Dorsolateral prefrontal cortex (tissue), 120 donors: ENCODE measurements at regions of chr3 and their contacts with region 1.

Region 1: DNA sequence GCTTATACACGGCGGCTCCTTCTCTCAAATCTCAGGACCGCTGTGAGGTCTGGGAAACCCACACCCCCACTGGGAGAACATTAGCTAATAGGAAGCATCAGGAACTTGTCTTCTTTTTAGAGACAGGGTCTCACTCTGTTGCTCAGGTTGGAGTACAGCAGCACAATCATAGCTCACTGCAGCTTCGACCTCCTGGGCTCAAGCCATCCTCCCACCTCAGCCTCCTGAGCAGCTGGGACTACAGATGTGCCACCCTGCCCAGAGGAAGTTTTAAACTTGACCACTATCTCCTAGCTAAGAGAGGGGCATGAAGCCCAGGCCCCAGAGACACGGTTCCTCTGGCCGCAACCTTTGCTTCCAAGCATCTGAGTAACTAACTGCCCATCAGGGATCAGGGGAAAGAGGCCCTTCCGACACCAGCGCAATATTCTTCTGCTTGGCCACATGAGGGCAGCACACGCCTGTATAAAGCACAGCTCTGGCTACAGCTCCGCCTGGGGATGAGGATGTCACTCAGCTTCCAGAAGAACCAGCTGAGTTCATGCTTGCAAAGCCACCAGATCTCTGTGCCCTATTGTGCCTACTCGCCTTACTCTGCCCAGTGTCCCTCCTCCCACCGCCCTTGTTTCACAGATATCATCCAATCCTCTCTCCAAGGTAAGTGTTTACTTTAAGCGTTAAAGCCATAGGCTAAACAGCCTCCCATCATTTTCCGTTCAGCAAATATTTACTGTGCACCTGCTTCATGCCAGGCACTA is 57.5 kb upstream of the SLC6A11 start:
- DNase-seq: peak in 9 of 10 donors; percentile 61 to 83 (median 75)
- H3K4me3 ChIP-seq: no peak overlapping the region
- H3K27ac ChIP-seq: peak overlapping the region in 15 of 59 donors; percentile 3 to 59 (median 41)
- H3K27me3 ChIP-seq: no peaks in the 10 kb centered on the region
- CTCF ChIP-seq: peak; percentile 40 to 96 (median 89)

Region 2: DNA sequence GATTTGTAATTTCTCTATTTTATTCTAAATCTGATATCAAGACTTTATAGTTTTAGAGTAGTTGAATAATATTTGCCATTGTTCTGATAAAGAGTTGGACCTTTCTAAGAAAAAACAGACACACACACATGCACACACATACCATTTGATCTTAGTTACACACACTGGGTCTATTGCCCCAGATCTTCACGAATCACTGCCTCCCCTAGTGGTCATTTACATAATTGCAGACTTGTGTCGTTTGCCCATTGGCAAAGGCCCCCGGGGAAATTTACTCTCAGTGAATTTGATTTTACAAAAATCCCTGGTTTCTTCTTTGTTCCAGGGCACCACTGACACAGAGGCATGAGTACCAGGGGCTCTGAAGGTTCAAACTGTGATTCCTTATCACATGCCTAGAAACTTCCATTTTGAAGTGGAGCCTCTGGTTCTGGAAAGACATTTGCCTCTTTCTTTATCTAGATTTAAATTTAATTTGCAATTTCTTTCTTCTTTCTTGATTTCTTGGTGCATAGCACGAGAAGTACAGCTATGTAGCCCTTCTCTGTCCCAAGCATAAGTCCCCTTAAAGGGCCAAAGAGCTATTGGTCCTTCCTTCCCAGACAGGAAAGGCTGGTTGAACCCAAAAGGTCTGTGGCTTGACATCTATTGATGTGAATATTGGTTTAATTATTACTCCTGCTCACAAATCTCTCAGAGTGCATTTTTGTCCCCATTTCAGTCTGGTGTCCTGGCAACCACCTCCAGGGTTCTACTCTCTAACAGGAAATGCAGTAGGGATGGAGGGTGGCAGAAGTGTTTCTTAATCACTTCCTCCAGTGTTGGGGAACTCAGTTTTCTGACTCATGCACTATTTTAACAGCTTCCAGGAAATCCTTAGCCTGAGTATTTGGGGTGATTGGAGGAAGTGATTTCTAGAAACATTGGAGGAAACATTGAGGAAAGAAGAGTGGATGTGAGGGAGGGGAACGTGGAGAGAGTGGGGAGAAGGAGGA is 25.2 kb after region 1 on chr3:
- intact Hi-C with region 1: loop called in 1 of 2 experiments (anchors 1 kb)
- DNase-seq: no peak
- H3K4me3 ChIP-seq: no peak overlapping the region
- H3K27ac ChIP-seq: no peak overlapping the region
- H3K27me3 ChIP-seq: peaks cover 0 to 7% (median 0%) of the 10 kb centered on the region in 45 donors
- CTCF ChIP-seq: peak; percentile 67 to 93 (median 81)

Region 3: DNA sequence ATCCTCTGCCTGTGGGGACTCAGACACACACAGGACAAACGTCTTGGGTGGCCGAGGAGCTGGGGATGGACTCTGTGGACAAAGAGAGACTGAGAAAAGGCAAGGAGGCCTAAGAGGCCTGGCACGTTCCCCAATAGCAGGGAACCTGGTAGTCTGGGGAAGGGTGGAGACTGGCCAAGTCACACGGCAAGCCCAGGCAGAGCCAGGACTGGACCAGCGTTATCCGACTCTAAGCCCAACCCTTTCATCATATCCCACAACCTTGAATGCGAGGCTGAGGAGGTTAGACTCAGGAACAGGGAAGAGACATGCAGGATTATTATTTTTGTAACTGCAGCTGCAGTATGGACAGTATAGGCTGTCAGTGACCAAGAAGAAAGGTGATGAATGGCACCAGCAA is 111.0 kb after region 1 on chr3:
- intact Hi-C with region 1: no loop called
- DNase-seq: no peak
- H3K4me3 ChIP-seq: no peak overlapping the region
- H3K27ac ChIP-seq: no peak overlapping the region
- H3K27me3 ChIP-seq: no peaks in the 10 kb centered on the region
- CTCF ChIP-seq: no peak

Region 4: DNA sequence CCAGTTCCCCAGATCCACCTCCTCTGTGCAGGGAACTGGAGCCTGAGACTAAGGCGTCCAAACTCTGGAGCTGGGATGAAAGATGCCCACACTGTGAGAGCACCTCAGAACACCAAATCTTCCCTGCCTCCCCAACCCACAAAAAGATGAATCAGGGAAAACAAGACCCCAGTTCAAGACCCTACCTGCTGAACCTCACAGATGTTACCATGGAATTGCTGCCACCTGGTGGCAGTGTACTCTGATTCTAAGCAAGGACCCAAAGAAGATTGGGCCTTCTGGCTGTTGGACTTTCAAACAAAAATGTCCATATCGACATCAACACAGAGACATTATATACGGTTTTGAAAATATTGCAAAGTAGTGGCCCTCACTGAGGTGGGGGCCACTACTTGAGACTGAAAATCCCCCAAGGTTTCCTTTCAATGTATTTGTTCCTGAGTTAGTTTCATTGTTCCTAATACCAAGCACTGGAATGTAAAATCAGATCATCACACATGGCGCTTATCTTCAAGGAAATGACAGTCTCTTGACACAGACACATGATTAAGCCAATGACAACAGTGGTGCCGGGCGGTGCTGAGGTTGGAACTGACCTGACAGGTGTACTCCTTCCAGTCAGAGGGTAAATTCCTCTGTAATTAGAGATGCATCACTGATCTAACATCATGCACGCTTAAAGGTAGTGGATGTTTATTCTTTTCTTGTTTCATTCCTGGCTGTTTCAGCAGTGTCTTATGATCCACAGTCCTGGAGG is 125.2 kb after region 1 on chr3:
- intact Hi-C with region 1: loop called (anchors 2 to 5 kb)
- DNase-seq: peak in 3 of 10 donors; percentile 15 to 39 (median 21)
- H3K4me3 ChIP-seq: no peak overlapping the region
- H3K27ac ChIP-seq: no peak overlapping the region
- H3K27me3 ChIP-seq: peaks cover 0 to 3% (median 0%) of the 10 kb centered on the region in 45 donors
- CTCF ChIP-seq: peak in 53 of 56 donors; percentile 27 to 70 (median 53)

Region 5: DNA sequence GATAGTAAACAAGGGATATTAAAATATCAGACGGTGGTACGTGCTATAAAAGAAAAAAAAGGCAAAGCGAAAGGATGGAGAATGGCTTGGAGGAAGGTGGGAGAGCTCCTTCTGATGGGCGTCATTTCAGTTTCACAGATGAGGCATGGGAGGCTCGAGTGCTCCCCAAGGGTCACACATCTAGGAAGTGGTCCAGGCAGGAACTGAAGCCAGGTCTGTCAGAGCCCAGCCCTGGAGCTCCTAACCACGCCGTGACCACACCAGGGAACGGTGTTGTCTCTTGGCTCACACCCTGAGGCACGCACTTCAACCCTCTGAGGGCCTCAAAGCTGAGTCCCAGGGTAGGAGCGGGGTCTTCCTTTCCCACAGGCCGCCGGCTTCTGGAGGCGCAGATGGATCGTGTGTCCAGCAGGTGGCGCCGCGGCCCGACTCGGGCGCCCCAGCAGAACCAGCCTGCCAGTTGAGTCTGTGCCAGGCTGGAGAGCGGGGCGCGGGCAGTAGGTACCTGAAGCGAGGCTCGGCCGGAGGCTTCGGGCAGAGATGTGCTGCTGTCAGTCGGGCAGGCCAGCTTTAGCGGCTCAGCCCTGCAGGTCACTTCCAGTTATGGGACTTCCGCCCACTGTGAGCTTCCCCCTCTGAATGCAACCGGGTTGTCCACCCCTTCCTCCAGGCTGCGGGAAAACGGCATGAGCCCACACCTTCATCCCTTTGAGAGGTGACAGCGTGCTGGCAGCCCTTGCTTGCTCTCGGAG is 302.2 kb after region 1 on chr3:
- intact Hi-C with region 1: loop called in 1 of 2 experiments (anchors 1 kb)
- DNase-seq: peak; percentile 35 to 86 (median 70)
- H3K4me3 ChIP-seq: peak overlapping the region in 57 of 59 donors; percentile 9 to 67 (median 47)
- H3K27ac ChIP-seq: peak overlapping the region in 34 of 59 donors; percentile 3 to 75 (median 40)
- H3K27me3 ChIP-seq: peaks cover 0 to 13% (median 0%) of the 10 kb centered on the region in 45 donors
- CTCF ChIP-seq: peak; percentile 78 to 98 (median 95)